WTC11 (cell line): ENCODE measurements at regions of chr1 and their contacts with region 1.

Region 1: DNA sequence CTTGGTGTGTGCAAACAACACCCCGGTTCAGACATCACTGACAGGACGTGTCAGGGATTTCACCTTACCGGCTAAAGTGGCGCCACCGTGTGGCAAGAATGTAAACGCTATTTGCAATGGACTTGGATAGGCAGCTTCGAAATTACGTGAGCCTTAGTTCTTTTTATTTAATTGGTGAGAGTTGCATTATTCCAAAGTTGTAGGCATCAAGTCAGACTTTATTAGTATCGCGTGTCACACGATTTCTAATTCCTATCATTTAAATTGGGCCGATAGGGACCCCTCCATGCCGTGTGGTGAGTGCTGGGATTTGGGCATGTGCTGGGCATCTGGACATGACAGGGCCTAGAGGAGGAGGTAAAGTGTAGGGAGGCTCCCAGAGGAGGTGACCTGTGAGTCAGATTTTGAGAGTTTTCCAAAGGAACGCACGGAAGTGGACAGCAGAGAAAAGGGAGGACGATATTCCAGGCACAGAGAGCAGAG is 14.5 kb upstream of the CPT2 start:
- DNase-seq: peak; percentile 90
- ATAC-seq: peak; percentile 79
- H3K4me3 Mint-ChIP-seq: no peak overlapping the region
- H3K27ac Mint-ChIP-seq: no peak overlapping the region
- H3K4me1 Mint-ChIP-seq: no peaks in the 10 kb centered on the region
- H3K27me3 Mint-ChIP-seq: peaks cover 16% of the 10 kb centered on the region; the same call in 1 of the 2 replicates
- CTCF ChIP-seq: peak; percentile 93

Region 2: DNA sequence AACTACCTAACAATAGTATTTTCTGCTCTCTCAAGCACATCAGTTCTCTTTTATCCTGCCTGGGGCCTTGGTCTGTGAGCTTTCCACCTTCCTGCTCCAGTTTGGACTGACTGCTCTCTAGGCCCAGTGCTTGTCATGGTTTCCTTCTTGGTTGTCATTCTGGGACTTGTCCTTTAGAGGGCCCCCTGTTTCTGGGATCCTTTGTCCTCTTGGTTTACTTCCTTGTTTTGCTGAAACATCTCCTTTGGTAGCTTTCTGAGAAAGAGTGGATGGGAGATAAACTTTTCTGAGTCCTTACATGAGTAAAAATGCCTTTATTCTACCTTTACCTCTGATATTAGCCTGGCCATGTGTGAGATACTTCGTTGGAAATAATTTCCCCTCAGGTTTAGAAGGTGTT is 44.4 kb before region 1 on chr1:
- CTCF ChIA-PET with region 1: interaction called, 12 read pairs
- POLR2A ChIA-PET with region 1: no interaction called
- DNase-seq: no peak
- ATAC-seq: peak; percentile 57
- H3K4me3 Mint-ChIP-seq: no peak overlapping the region
- H3K27ac Mint-ChIP-seq: no peak overlapping the region
- H3K4me1 Mint-ChIP-seq: 0 out of 2 replicates have a peak, but pooled peaks cover 7% of the 10 kb centered on the region
- H3K27me3 Mint-ChIP-seq: peaks cover 2% of the 10 kb centered on the region
- CTCF ChIP-seq: no peak

Region 3: DNA sequence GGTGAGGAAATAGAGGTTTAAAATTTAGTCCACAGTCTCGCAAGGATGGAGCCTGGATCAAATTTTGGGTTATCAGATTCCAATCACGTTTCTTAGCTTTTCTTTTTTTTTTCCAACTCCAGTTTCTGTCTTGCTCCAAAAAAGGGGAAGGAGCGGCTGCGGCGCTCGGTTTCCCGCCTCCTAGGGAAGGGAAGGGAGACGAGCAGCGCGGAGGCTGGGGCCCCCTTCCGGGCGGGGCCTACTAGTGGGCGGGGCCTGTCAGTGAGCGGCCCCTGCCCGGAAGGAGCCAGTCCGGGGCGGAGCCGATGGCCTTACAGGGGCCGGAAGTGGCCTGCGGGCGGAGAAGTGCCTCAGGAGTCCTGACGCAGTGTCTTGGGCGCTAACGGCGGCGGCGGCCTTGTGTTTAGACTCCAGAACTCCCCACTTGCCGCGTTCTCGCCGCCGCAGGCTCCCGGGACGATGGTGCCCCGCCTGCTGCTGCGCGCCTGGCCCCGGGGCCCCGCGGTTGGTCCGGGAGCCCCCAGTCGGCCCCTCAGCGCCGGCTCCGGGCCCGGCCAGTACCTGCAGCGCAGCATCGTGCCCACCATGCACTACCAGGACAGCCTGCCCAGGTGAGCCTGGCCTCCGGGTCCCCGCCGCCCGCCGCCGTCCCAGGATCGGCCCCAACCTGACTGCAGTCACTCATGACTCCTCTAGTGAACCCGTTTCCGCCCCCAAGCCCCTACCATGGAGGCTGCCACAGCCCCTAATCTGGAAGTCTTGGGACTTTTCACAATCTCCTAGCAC is 14.5 kb after region 1 on chr1 and contains the start of gene CPT2:
- CTCF ChIA-PET with region 1: interaction called, 13 read pairs
- POLR2A ChIA-PET with region 1: no interaction called
- DNase-seq: peak; percentile 93
- ATAC-seq: peak; percentile 98
- H3K4me3 Mint-ChIP-seq: peak within 1 kb of the TSS; percentile 93
- H3K27ac Mint-ChIP-seq: peak within 1 kb of the TSS; percentile 87
- H3K4me1 Mint-ChIP-seq: peaks cover 20% of the 10 kb centered on the region
- H3K27me3 Mint-ChIP-seq: peaks cover 23% of the 10 kb centered on the region
- CTCF ChIP-seq: no peak
- total RNA-seq, gene CPT2: 30.3 to 33.7 TPM (median 31.8 TPM) in 3 replicates

Region 4: GRCh38 chr1:53401813-53402745 is 219.9 kb after region 1 on chr1:
- CTCF ChIA-PET with region 1: no interaction called
- POLR2A ChIA-PET with region 1: no interaction called
- DNase-seq: no peak
- ATAC-seq: no peak
- H3K4me3 Mint-ChIP-seq: no peak overlapping the region
- H3K27ac Mint-ChIP-seq: no peak overlapping the region
- H3K4me1 Mint-ChIP-seq: peaks cover 29% of the 10 kb centered on the region
- H3K27me3 Mint-ChIP-seq: peaks cover 62% of the 10 kb centered on the region
- CTCF ChIP-seq: no peak